ENCODE measurements at regions of chr15 and their contacts with region 1.

Region 1: DNA sequence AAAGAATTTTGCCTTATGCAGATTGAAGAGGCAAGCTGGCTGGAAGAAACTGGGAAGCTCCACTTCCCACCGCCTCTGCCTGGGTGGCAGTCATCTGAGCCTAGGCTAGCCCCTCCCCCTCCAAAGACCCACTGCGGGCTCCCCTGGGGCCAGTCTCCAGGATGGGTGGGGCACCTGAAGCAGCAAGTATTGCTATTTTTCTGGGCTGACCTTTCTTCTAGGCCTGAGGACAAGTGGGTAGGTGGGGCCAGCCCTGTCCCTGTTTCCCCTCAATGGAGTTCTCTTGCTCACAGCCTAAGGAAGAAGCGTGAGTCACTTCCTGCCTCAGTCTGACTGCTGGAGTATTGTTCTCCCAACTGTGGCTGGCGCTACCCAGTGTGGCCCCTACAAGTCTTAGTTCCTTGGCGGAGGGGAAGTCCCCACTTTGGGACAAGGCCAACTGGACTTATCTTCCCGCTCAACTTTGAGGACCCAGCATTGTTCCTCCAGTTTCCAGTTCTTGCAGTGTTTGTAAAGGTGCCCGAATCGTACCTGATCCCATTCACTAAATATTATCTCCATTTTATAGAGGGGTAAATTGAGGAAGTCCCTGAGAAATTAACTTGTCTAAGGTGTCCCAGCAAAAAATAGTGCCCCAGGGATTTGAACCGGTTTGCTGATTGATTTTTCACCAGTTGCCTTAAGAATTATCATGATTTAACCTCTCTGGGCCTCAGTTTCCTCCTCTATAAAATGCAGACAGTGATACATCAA is 1.4 kb downstream of the FURIN start:
- DNase-seq: peak in 6 of 14 experiments; percentile 17 to 74 (median 52)
- ATAC-seq: peak; percentile 32
- H3K4me3 ChIP-seq: no peak overlapping the region
- H3K4me3 Mint-ChIP-seq: peak overlapping the region; percentile 98
- H3K27ac ChIP-seq: peak overlapping the region in 1 of 2 donors; percentile 25
- H3K27ac Mint-ChIP-seq: peak overlapping the region; percentile 89
- H3K4me1 ChIP-seq: peaks cover 46% of the 10 kb centered on the region
- H3K4me1 Mint-ChIP-seq: peaks cover 41% of the 10 kb centered on the region
- H3K27me3 ChIP-seq: no peaks in the 10 kb centered on the region
- H3K27me3 Mint-ChIP-seq: no peaks in the 10 kb centered on the region
- CTCF ChIP-seq: no peak

Region 2: DNA sequence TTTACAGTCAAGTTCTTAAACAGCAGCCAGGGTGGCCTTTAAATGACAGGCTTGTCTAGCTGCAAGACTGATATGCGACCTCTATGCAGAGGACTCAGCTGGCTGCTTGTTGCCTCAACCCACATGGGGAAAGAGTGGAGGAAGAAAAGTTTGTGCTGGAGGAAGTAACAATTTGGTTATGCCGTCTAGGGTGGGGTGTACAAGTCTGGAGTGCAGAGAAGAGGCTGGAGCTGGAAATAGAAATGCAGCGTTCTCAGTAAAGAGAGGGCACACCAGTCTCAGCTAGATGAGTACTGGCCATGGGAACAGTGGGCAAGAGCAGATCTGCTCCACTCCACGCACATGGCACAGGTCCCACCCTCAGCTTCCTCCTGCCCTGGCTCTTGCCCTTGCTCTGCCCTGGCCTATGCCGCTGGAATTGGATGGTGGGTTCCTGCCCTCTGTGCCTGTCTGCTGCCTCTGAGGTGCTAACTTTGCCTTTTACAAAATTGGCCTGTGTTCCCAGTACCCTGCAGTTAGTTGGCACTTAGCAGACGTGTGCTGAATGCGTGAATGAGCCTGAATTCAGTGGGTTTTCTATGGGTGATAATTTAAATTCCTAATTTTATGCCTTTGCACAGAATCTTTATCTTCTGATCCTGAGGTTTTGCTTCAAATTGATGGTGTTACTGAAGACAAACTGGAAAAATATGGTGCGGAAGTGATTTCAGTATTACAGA is 61.1 kb before region 1 on chr15:
- CTCF ChIA-PET with region 1: no interaction called
- POLR2A ChIA-PET with region 1: no interaction called
- intact Hi-C with region 1: loop called in 1 of 2 experiments (anchors 5 kb)
- DNase-seq: no peak
- ATAC-seq: no peak
- H3K4me3 ChIP-seq: no peak overlapping the region
- H3K4me3 Mint-ChIP-seq: no peak overlapping the region
- H3K27ac ChIP-seq: no peak overlapping the region
- H3K27ac Mint-ChIP-seq: no peak overlapping the region
- H3K4me1 ChIP-seq: peaks cover 11% of the 10 kb centered on the region
- H3K4me1 Mint-ChIP-seq: peaks cover 6% of the 10 kb centered on the region
- H3K27me3 ChIP-seq: no peaks in the 10 kb centered on the region
- H3K27me3 Mint-ChIP-seq: no peaks in the 10 kb centered on the region
- CTCF ChIP-seq: no peak

Region 3: GRCh38 chr15:90818251-90819210 is 51.2 kb before region 1 on chr15:
- CTCF ChIA-PET with region 1: no interaction called
- POLR2A ChIA-PET with region 1: no interaction called
- intact Hi-C with region 1: loop called in 1 of 2 experiments (anchors 5 kb)
- DNase-seq: peak in 4 of 14 experiments; percentile 24 to 53 (median 50)
- ATAC-seq: peak; percentile 70
- H3K4me3 ChIP-seq: no peak overlapping the region
- H3K4me3 Mint-ChIP-seq: no peak overlapping the region
- H3K27ac ChIP-seq: no peak overlapping the region
- H3K27ac Mint-ChIP-seq: no peak overlapping the region
- H3K4me1 ChIP-seq: peaks cover 56% of the 10 kb centered on the region
- H3K4me1 Mint-ChIP-seq: peaks cover 26% of the 10 kb centered on the region
- H3K27me3 ChIP-seq: no peaks in the 10 kb centered on the region
- H3K27me3 Mint-ChIP-seq: no peaks in the 10 kb centered on the region
- CTCF ChIP-seq: peak; percentile 22